Activated CD4-positive, alpha-beta T cell treated with anti-CD3 and anti-CD28 coated beads, Interleukin-2, amount 10 ng/mL, durations not matched to agents 24 days and 14 days (primary cell): ENCODE measurements at regions of chr13 and their contacts with region 1.

Region 1: GRCh38 chr13:24512197-24512907 is at the start of gene PARP4:
- DNase-seq: peak; percentile 93
- H3K4me3 Mint-ChIP-seq: peak within 1 kb of the TSS; percentile 90
- H3K27ac Mint-ChIP-seq: peak within 1 kb of the TSS; percentile 98
- H3K4me1 Mint-ChIP-seq: peaks cover 30% of the 10 kb centered on the region
- H3K27me3 Mint-ChIP-seq: peaks cover 3% of the 10 kb centered on the region
- total RNA-seq, gene PARP4: 33.0 and 34.8 TPM in 2 replicates

Region 2: GRCh38 chr13:23375001-23375971 is 1137.1 kb before region 1 on chr13:
- intact Hi-C with region 1: loop called (anchors 5 kb)
- DNase-seq: peak; percentile 98
- H3K4me3 Mint-ChIP-seq: peak overlapping the region; percentile 79
- H3K27ac Mint-ChIP-seq: peak overlapping the region; percentile 64
- H3K4me1 Mint-ChIP-seq: peaks cover 54% of the 10 kb centered on the region
- H3K27me3 Mint-ChIP-seq: no peaks in the 10 kb centered on the region

Region 3: GRCh38 chr13:24228852-24229458 is 283.4 kb before region 1 on chr13:
- intact Hi-C with region 1: loop called (anchors 1 kb)
- DNase-seq: peak; percentile 82
- H3K4me3 Mint-ChIP-seq: no peak overlapping the region
- H3K27ac Mint-ChIP-seq: peak overlapping the region; percentile 10
- H3K4me1 Mint-ChIP-seq: peaks cover 48% of the 10 kb centered on the region
- H3K27me3 Mint-ChIP-seq: no peaks in the 10 kb centered on the region

Region 4: DNA sequence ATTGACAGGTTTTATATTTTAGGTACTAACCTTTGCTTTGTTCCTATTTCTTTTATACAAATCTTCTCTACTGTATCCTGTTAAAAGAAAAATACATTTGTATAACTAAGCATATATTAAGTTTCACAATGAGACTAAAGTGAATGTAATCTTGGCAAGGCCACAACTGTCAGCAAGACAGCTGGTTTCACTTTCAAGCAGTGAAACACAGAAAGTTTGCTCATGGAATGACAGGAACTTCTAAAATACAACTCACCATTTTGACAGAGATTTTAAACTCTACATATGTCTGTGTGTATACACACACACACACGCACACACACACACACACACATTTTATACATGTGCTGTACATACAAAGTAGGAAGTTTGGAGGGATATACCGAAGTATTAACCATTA is 53.1 kb before region 1 on chr13:
- intact Hi-C with region 1: loop called (anchors 1 kb)
- DNase-seq: peak; percentile 68
- H3K4me3 Mint-ChIP-seq: no peak overlapping the region
- H3K27ac Mint-ChIP-seq: peak overlapping the region; percentile 77
- H3K4me1 Mint-ChIP-seq: peaks cover 28% of the 10 kb centered on the region
- H3K27me3 Mint-ChIP-seq: no peaks in the 10 kb centered on the region

Region 5: GRCh38 chr13:24618014-24618955 is 105.9 kb after region 1 on chr13:
- intact Hi-C with region 1: loop called (anchors 1 kb)
- DNase-seq: peak; percentile 83
- H3K4me3 Mint-ChIP-seq: peak overlapping the region; percentile 6
- H3K27ac Mint-ChIP-seq: peak overlapping the region; percentile 85
- H3K4me1 Mint-ChIP-seq: peaks cover 28% of the 10 kb centered on the region
- H3K27me3 Mint-ChIP-seq: no peaks in the 10 kb centered on the region

Region 6: GRCh38 chr13:24922745-24923591 is 410.6 kb after region 1 on chr13:
- intact Hi-C with region 1: loop called (anchors 5 kb)
- DNase-seq: peak; percentile 99
- H3K4me3 Mint-ChIP-seq: peak overlapping the region; percentile 99
- H3K27ac Mint-ChIP-seq: peak overlapping the region; percentile 93
- H3K4me1 Mint-ChIP-seq: peaks cover 21% of the 10 kb centered on the region
- H3K27me3 Mint-ChIP-seq: peaks cover 12% of the 10 kb centered on the region